Activated CD8-positive, alpha-beta T cell treated with anti-CD3 and anti-CD28 coated beads, Interleukin-2, amount 10 ng/mL, durations not matched to agents 7 days and 5 days (primary cell): ENCODE measurements at regions of chr2 and their contacts with region 1.

Region 1: DNA sequence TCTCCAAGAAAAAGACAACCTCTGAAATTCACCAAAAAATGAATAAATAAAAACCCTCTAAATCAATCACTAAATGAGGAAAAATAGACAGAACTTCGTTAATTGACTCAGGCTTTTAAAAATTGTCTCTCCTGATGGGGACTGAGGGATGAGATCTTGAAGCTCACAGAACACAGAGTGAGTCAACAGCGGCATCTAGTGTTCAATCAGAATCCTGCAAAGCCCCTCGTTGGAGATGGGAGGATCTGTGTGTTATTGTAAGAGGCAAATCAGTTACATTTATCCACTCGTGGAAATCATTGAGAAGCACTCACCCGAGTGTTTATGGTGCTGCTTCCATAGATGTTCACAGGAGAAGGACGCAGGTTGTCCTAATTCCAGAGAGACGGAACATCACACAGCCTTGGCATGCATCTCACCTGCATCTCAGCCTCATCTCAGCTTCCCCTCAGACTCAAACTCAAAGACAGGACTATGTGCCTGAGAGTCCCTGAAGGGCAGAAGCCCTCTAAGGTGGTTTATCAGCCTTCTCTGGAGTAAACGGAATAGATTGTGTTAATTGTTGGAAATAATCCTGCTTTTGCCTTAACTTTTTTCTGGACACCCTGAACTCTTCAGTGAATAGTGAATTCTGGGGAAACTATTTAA is 82.0 kb downstream of the MREG start:
- DNase-seq: peak; percentile 74
- ATAC-seq: peak; percentile 80
- H3K4me3 Mint-ChIP-seq: no peak overlapping the region
- H3K27ac Mint-ChIP-seq: no peak overlapping the region
- H3K4me1 Mint-ChIP-seq: peaks cover 9% of the 10 kb centered on the region
- H3K27me3 Mint-ChIP-seq: peaks cover 10% of the 10 kb centered on the region

Region 2: GRCh38 chr2:215454519-215455246 is 476.7 kb before region 1 on chr2:
- CTCF ChIA-PET with region 1: interaction called, 18 read pairs
- POLR2A ChIA-PET with region 1: no interaction called
- DNase-seq: no peak
- ATAC-seq: no peak
- H3K4me3 Mint-ChIP-seq: no peak overlapping the region
- H3K27ac Mint-ChIP-seq: no peak overlapping the region
- H3K4me1 Mint-ChIP-seq: no peaks in the 10 kb centered on the region
- H3K27me3 Mint-ChIP-seq: peaks cover 23% of the 10 kb centered on the region

Region 3: GRCh38 chr2:215805493-215805892 is 125.9 kb before region 1 on chr2:
- CTCF ChIA-PET with region 1: no interaction called
- POLR2A ChIA-PET with region 1: no interaction called
- DNase-seq: no peak
- ATAC-seq: no peak
- H3K4me3 Mint-ChIP-seq: no peak overlapping the region
- H3K27ac Mint-ChIP-seq: no peak overlapping the region
- H3K4me1 Mint-ChIP-seq: peaks cover 2% of the 10 kb centered on the region
- H3K27me3 Mint-ChIP-seq: peaks cover 5% of the 10 kb centered on the region

Region 4: GRCh38 chr2:215915441-215915840 is 15.9 kb before region 1 on chr2:
- CTCF ChIA-PET with region 1: interaction called, 13 read pairs
- POLR2A ChIA-PET with region 1: no interaction called
- DNase-seq: no peak
- ATAC-seq: no peak
- H3K4me3 Mint-ChIP-seq: no peak overlapping the region
- H3K27ac Mint-ChIP-seq: no peak overlapping the region
- H3K4me1 Mint-ChIP-seq: peaks cover 5% of the 10 kb centered on the region
- H3K27me3 Mint-ChIP-seq: peaks cover 24% of the 10 kb centered on the region

Region 5: GRCh38 chr2:215920244-215921100 is 10.9 kb before region 1 on chr2:
- CTCF ChIA-PET with region 1: interaction called, 13 read pairs
- POLR2A ChIA-PET with region 1: no interaction called
- DNase-seq: peak; percentile 68
- ATAC-seq: peak; percentile 86
- H3K4me3 Mint-ChIP-seq: no peak overlapping the region
- H3K27ac Mint-ChIP-seq: no peak overlapping the region
- H3K4me1 Mint-ChIP-seq: peaks cover 5% of the 10 kb centered on the region
- H3K27me3 Mint-ChIP-seq: peaks cover 5% of the 10 kb centered on the region

Region 6: DNA sequence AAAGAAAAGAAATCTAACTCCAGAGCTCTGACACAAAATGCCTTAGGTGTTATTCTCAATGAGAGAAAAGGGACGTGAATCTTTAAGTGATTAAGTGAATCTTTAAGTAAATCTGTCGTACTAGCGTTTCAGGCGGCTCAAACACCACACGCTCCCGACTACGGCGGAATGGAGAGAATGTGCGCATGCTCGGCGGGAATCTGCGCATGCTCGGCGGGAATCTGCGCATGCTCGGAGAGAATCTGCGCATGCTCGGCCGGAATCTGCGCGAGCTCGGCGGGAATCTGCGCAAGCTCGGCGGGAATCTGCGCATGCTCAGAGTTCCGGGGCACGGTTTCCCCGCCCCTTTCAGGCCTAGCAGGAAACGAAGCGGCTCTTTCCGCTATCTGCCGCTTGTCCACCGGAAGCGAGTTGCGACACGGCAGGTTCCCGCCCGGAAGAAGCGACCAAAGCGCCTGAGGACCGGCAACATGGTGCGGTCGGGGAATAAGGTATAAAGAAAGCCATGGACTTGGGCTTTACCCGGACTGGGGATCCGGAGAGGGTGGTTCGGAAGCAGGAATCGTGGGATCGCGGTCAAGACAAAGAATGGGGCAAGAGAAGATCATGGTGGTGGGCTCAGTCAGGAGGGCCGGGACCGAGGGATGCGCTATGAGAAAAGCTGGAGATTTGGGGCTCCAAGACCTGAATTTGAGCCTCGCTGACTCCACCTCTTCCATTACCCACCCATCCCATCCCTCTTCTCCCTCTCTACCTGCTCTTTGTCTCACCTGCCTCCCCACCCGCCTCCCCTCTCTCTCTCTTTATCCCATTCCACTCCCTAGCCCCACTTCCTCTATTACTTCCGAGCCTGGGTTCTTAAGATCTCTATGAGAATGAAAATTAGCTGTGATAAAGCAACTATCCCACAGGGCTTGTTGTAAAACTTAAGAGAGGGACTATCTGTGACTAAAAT is 177.9 kb after region 1 on chr2 and contains the start of gene XRCC5:
- CTCF ChIA-PET with region 1: no interaction called
- POLR2A ChIA-PET with region 1: no interaction called
- DNase-seq: peak; percentile 98
- ATAC-seq: peak; percentile 80
- H3K4me3 Mint-ChIP-seq: peak within 1 kb of the TSS; percentile 99
- H3K27ac Mint-ChIP-seq: peak within 1 kb of the TSS; percentile 99
- H3K4me1 Mint-ChIP-seq: peaks cover 54% of the 10 kb centered on the region
- H3K27me3 Mint-ChIP-seq: no peaks in the 10 kb centered on the region
- total RNA-seq, gene XRCC5: 362 to 394 TPM